Right lobe of liver (tissue), 6 donors: ENCODE measurements at regions of chr16 and their contacts with region 1.

Region 1: DNA sequence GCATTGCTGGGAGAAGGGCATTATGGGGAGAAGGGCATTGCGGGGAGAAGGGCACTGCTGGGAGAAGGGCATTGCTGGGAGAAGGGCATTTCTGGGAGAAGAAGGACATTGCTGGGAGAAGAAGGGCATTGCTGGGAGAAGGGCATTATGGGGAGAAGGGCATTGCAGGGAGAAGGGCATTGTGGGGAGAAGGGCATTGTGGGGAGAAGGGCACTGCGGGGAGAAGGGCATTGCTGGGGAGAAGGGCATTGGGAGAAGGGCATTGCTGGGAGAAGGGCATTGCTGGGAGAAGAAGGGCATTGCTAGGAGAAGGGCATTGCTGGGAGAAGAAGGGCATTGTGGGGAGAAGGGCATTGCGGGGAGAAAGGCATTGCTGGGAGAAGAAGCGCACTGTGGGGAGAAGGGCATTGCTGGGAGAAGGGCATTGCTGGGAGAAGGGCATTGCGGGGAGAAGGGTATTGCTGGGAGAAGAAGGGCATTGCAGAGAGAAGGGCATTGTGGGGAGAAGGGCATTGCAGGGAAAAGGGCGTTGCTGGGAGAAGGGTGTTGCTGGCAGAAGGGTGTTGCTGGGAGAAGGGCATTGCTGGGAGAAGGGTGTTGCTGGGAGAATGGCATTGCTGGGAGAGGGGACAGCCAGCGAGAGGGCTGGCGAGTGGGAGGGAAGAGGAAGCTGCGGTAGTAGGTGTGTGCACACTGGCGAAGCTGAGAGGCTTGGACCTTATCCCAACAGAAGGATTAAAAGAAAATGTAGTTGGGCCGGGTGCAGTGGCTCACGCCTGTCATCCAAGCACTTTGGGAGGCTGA is 4.6 kb upstream of the PYDC1 start:
- DNase-seq: no peak
- ATAC-seq: no peak
- H3K4me3 ChIP-seq: no peak overlapping the region
- H3K27ac ChIP-seq: no peak overlapping the region
- H3K4me1 ChIP-seq: peaks cover 0 to under 1% (median 0%) of the 10 kb centered on the region in 4 donors
- H3K27me3 ChIP-seq: no peaks in the 10 kb centered on the region
- CTCF ChIP-seq: no peak
- POLR2A ChIP-seq: no peak

Region 2: GRCh38 chr16:31032736-31033708 is 188.5 kb before region 1 on chr16 and contains the start of gene STX4:
- intact Hi-C with region 1: no loop called
- DNase-seq: peak; percentile 98 to 99 (median 99)
- ATAC-seq: peak; percentile 91 to 92 (median 92)
- H3K4me3 ChIP-seq: peak within 1 kb of the TSS; percentile 73 to 95 (median 81)
- H3K27ac ChIP-seq: peak within 1 kb of the TSS; percentile 87 to 98 (median 97)
- H3K4me1 ChIP-seq: peaks cover 0 to 11% (median 5%) of the 10 kb centered on the region in 4 donors
- H3K27me3 ChIP-seq: no peaks in the 10 kb centered on the region
- CTCF ChIP-seq: peak in 1 of 4 donors; percentile 19
- POLR2A ChIP-seq: peak; percentile 33
- total RNA-seq, gene STX4: 18.8 to 52.8 (median 23.6) TPM

Region 3: GRCh38 chr16:31168848-31169247 is 52.7 kb before region 1 on chr16:
- intact Hi-C with region 1: no loop called
- DNase-seq: no peak
- ATAC-seq: peak; percentile 64 to 89 (median 80)
- H3K4me3 ChIP-seq: no peak overlapping the region
- H3K27ac ChIP-seq: no peak overlapping the region
- H3K4me1 ChIP-seq: no peaks in the 10 kb centered on the region
- H3K27me3 ChIP-seq: no peaks in the 10 kb centered on the region
- CTCF ChIP-seq: no peak
- POLR2A ChIP-seq: no peak

Region 4: GRCh38 chr16:31286421-31287032 is 65.0 kb after region 1 on chr16:
- intact Hi-C with region 1: no loop called
- DNase-seq: no peak
- ATAC-seq: no peak
- H3K4me3 ChIP-seq: no peak overlapping the region
- H3K27ac ChIP-seq: no peak overlapping the region
- H3K4me1 ChIP-seq: no peaks in the 10 kb centered on the region
- H3K27me3 ChIP-seq: no peaks in the 10 kb centered on the region
- CTCF ChIP-seq: no peak
- POLR2A ChIP-seq: no peak

Region 5: GRCh38 chr16:31354394-31355291 is 133.1 kb after region 1 on chr16 and contains the start of gene ITGAX:
- intact Hi-C with region 1: loop called in 1 of 2 experiments (anchors 10 kb)
- DNase-seq: peak; percentile 66 to 76 (median 71)
- ATAC-seq: peak; percentile 50 to 63 (median 58)
- H3K4me3 ChIP-seq: no peak within 1 kb of the TSS
- H3K27ac ChIP-seq: peak within 1 kb of the TSS; percentile 31 to 63 (median 47)
- H3K4me1 ChIP-seq: no peaks in the 10 kb centered on the region
- H3K27me3 ChIP-seq: no peaks in the 10 kb centered on the region
- CTCF ChIP-seq: no peak
- POLR2A ChIP-seq: peak; percentile 58
- total RNA-seq, gene ITGAX: 2.0 to 15.3 (median 5.2) TPM